Panc1 (cell line): ENCODE measurements at regions of chr12 and their contacts with region 1.

Region 1: DNA sequence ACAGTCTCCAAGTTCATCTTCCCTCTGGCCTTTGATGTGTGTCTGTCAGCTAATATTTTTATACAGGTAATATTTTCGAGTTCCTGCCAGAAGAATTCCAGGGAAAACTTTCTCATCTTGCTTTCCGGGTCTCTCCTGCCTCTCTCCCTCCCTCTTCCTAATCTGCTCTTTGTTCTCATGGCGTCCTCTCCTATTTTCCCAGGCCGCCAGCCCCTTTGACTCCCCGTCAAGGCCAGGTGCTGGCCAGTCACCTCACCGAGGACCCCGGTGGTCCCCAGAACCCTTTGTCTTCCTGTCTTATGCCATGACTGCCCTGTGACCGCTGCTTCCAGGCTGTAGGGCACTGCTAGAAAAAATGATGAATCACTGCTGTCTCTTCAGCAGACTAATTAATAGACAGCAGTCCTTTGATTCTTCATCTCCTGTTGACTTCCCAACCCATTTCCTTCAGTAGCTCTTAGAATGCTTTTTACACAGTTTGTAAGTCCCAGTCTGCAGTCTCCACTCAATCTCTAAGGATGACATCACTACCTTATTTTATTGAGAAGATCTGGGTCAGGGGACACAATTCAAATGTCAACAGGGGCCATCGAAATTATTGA is 40.7 kb downstream of the PPFIBP1 start:
- DNase-seq: no peak
- ATAC-seq: no peak
- H3K4me3 ChIP-seq: no peak overlapping the region
- H3K27ac ChIP-seq: peak overlapping the region; percentile 52
- H3K4me1 ChIP-seq: peaks cover 36% of the 10 kb centered on the region
- H3K27me3 ChIP-seq: no peaks in the 10 kb centered on the region
- CTCF ChIP-seq: no peak

Region 2: GRCh38 chr12:27347779-27348178 is 216.9 kb before region 1 on chr12:
- CTCF ChIA-PET with region 1: no interaction called
- POLR2A ChIA-PET with region 1: interaction called, 17 read pairs
- in situ Hi-C with region 1: no loop called
- intact Hi-C with region 1: no loop called
- DNase-seq: no peak
- ATAC-seq: no peak
- H3K4me3 ChIP-seq: no peak overlapping the region
- H3K27ac ChIP-seq: no peak overlapping the region
- H3K4me1 ChIP-seq: peaks cover 16% of the 10 kb centered on the region; the same call in 1 of the 2 replicates
- H3K27me3 ChIP-seq: no peaks in the 10 kb centered on the region
- CTCF ChIP-seq: no peak

Region 3: DNA sequence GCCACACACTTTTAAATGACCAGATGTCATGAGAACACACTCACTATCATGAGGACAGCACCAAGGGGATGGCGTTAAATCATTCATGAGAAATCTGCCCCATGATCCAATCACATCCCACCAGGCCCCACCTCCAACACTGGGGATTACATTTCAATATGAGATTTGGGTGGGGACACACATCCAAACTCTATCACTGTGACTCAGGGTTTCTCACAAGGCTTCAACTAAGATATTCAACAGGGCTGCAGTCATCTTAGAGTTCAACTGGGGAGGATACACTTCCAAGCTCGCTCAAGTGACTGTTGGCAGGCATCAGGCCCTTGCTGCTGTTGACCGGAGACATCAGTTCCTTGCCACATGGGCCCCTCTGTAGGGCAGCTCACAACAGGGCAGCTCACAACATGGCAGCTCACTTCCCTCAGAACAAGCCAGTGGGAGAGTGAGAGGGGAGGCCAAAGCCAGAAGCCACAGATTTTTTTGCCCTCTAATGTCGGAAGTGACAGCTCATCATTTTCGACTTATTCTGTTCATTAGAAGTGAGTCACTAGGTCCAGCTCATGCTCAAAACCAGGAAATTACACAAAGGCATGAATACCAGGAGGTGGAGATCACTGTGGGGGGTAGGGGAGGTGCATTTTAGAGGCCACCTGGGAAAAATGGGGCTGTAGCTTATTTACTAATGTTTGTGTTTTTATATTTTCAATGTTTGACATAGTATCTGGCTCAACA is 458.6 kb after region 1 on chr12:
- CTCF ChIA-PET with region 1: no interaction called
- POLR2A ChIA-PET with region 1: no interaction called
- in situ Hi-C with region 1: no loop called
- intact Hi-C with region 1: no loop called
- DNase-seq: no peak
- ATAC-seq: no peak
- H3K4me3 ChIP-seq: no peak overlapping the region
- H3K27ac ChIP-seq: no peak overlapping the region
- H3K4me1 ChIP-seq: no peaks in the 10 kb centered on the region
- H3K27me3 ChIP-seq: no peaks in the 10 kb centered on the region; the same call in 1 of the 2 replicates
- CTCF ChIP-seq: no peak